Cardiac septum (tissue), 1 donor: ENCODE measurements at regions of chr15 and their contacts with region 1.

Region 1: DNA sequence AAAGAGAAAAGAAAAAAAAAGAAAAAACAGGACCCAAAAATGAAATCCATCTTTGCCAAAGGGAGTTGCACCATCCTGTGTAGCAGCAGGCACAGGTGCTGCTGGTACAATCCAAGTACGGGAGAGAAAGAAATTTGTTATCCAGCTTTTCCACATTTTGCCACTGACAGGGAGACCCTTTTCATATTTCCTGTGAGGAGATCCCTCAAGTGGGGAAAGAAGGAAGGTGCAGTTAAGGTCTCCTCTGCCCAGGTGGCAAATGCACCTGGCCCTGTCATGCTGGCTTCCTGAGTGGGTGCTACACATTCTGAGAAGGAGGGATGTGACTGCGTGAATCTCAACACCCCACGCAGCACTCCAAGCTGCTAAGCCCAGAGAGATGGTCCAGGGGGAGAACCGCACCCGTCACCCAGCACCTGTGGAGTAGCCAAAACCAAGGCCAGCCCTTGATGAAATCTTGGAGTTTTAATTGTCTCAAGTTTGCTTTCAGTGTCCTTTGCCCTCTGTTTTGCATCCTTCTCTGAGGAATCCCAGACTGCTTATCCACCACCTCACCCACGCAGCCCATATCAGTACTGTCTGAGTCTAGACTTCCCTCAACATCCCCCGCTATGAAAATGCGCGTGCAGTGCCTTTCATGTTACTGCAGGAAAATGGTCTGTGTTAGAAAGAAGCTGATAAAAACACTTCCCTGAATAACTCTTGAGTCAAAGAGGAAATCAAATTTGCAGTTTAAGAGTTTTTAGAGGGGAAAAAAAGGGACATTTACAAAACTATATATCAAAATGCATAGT is 141.9 kb upstream of the THBS1 start:
- DNase-seq: no peak

Region 2: DNA sequence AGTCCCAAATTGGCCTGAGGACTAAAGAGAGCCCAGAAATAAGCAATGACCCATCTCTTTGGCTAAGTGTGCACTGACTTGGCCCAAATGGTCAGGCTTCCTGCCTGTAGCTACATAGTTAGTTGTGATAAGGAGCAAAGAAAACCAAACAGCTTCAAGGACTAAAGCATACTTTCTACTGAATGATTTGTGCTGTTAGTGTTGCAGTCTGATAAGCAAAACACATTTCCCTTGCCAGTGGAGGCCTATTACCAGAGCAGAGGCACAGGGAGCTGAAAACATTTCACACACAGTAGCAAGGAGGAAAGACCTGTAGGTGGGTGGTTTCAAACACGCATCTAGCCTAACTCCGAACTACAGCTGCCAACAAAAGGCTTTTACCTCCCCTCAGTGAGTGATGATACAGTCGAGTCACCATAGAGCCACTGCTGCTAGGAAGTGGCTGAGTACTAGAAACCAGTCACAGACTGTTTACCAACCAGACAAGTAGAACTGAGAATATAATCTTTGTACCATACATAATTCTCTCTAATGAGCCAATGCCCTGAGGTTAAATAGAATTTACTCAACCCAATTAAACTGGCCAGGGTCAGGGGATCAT is 80.5 kb before region 1 on chr15:
- intact Hi-C with region 1: loop called (anchors 2 kb)
- DNase-seq: no peak